ENCODE measurements at regions of chr12 and their contacts with region 1.

Region 1: GRCh38 chr12:8989413-8989812 is at the start of gene KLRG1:
- DNase-seq: peak in 2 of 14 experiments; percentile 34 to 63
- ATAC-seq: peak; percentile 37
- H3K4me3 ChIP-seq: peak within 1 kb of the TSS; percentile 50
- H3K4me3 Mint-ChIP-seq: peak within 1 kb of the TSS; percentile 71
- H3K27ac ChIP-seq: peak within 1 kb of the TSS; percentile 49 to 52
- H3K27ac Mint-ChIP-seq: peak within 1 kb of the TSS; percentile 63
- H3K4me1 ChIP-seq: peaks cover 50% of the 10 kb centered on the region
- H3K4me1 Mint-ChIP-seq: peaks cover 70% of the 10 kb centered on the region
- H3K27me3 ChIP-seq: no peaks in the 10 kb centered on the region
- H3K27me3 Mint-ChIP-seq: no peaks in the 10 kb centered on the region
- CTCF ChIP-seq: no peak
- total RNA-seq, gene KLRG1: 8.4 to 10.5 TPM

Region 2: GRCh38 chr12:8722286-8722685 is 267.1 kb before region 1 on chr12:
- CTCF ChIA-PET with region 1: no interaction called
- POLR2A ChIA-PET with region 1: no interaction called
- intact Hi-C with region 1: no loop called
- DNase-seq: no peak
- ATAC-seq: no peak
- H3K4me3 ChIP-seq: no peak overlapping the region
- H3K4me3 Mint-ChIP-seq: no peak overlapping the region
- H3K27ac ChIP-seq: no peak overlapping the region
- H3K27ac Mint-ChIP-seq: no peak overlapping the region
- H3K4me1 ChIP-seq: no peaks in the 10 kb centered on the region
- H3K4me1 Mint-ChIP-seq: peaks cover 10% of the 10 kb centered on the region
- H3K27me3 ChIP-seq: no peaks in the 10 kb centered on the region
- H3K27me3 Mint-ChIP-seq: no peaks in the 10 kb centered on the region
- CTCF ChIP-seq: no peak

Region 3: GRCh38 chr12:8960176-8960575 is 29.2 kb before region 1 on chr12:
- CTCF ChIA-PET with region 1: no interaction called
- POLR2A ChIA-PET with region 1: interaction called, 3 read pairs
- intact Hi-C with region 1: loop called in 1 of 2 experiments (anchors 5 kb)
- DNase-seq: peak in 3 of 14 experiments; percentile 40 to 70 (median 67)
- ATAC-seq: peak; percentile 97
- H3K4me3 ChIP-seq: no peak overlapping the region
- H3K4me3 Mint-ChIP-seq: peak overlapping the region; percentile 65
- H3K27ac ChIP-seq: peak overlapping the region; percentile 47
- H3K27ac Mint-ChIP-seq: peak overlapping the region; percentile 93
- H3K4me1 ChIP-seq: peaks cover 60% of the 10 kb centered on the region
- H3K4me1 Mint-ChIP-seq: peaks cover 74% of the 10 kb centered on the region
- H3K27me3 ChIP-seq: no peaks in the 10 kb centered on the region
- H3K27me3 Mint-ChIP-seq: no peaks in the 10 kb centered on the region
- CTCF ChIP-seq: no peak

Region 4: DNA sequence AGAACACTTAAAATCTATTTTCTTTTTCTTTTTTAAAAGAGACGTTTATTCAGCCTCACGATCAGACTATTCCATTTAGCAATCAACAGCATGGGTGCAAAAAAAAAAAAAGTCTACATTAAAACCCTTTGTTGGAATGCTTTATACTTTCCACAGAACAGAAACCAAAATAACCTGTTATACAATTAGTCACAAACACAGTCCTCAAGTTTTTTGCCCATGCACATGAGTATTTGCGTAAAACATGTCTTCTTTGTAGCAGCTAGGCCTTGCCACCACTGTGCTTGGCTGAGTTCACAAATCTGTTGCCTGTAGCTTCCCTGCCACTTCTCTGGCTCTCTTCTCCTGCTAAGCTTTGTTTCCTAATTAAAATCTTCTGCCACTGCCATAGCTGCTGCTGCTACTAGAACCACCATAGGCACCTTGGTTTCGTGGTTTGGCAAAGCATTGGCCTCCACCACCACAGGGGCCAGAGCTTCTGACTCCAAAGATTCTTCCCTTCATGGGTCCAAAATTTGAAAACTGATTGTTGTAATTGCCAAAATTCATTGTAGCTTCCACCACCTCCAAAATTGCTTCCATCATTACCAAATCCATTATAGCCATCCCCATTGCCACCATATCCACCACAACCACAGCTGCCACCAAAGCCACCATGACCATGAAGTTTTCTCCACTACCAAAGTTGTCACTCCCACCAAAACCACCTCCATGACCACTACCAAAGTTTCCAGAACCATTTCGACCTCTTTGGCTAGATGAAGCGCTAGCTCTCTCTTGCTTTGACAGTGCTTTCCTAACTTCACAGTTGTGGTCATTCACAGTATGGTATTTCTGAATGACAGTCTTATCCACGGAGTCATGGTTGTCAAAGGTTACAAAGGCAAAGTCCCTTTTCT is 38.0 kb after region 1 on chr12:
- CTCF ChIA-PET with region 1: interaction called, 5 read pairs
- POLR2A ChIA-PET with region 1: interaction called, 8 read pairs
- intact Hi-C with region 1: loop called (anchors 2 to 5 kb)
- DNase-seq: peak in 2 of 14 experiments; percentile 21 to 44
- ATAC-seq: no peak
- H3K4me3 ChIP-seq: no peak overlapping the region
- H3K4me3 Mint-ChIP-seq: peak overlapping the region; percentile 58
- H3K27ac ChIP-seq: peak overlapping the region; percentile 63 to 92
- H3K27ac Mint-ChIP-seq: no peak overlapping the region
- H3K4me1 ChIP-seq: peaks cover 83% of the 10 kb centered on the region
- H3K4me1 Mint-ChIP-seq: peaks cover 49% of the 10 kb centered on the region
- H3K27me3 ChIP-seq: no peaks in the 10 kb centered on the region
- H3K27me3 Mint-ChIP-seq: no peaks in the 10 kb centered on the region
- CTCF ChIP-seq: no peak